ENCODE measurements at regions of chr17 and their contacts with region 1.

Region 1: DNA sequence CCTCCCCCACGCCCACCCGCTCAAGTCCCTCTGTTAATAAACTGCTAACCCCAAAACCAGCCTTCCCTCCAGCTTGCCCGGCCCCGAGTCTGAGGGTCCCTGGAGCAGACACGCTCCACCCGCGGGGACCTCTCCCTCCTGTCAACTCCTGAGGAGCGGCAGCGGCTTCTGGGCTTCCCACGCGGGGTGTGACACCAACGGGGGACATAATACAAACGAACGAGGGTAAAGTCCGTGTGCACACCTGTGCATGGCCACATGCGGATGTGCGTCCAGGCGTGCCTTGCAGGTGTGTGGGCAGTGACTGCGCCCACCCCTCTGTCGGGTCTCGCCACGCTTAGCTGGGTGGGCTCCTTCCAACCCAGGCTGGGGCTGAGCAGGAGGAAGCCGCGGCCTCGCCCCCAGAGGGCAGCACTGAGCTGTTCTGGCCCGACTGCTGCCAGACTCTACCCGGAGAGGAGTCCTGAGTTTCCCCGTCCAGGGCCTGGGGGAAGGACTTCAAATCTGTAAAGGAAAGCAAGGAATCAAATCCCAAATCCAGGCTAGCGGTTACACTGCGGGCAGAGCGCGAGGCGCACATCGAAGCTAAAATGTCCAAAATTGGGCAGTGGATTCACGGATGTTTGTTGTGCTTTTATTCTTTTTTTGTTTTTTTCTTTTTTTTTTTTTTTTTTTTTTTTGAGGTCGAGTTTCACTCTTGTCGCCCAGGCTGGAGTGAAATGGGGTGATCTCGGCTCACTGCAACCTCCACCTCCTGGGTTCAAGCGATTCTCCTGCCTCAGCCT is 24.2 kb upstream of the KRT17 start:
- DNase-seq: peak; percentile 92 to 93
- ATAC-seq: peak; percentile 84 to 94
- H3K4me3 ChIP-seq: peak overlapping the region; percentile 48
- H3K27ac ChIP-seq: peak overlapping the region; percentile 85 to 89
- H3K4me1 ChIP-seq: peaks cover 40% of the 10 kb centered on the region
- CTCF ChIP-seq: peak; percentile 93
- EP300 ChIP-seq: no peak
- POLR2A ChIP-seq: peak; percentile 38
- RAD21 ChIP-seq: peak; percentile 66 to 69

Region 2: DNA sequence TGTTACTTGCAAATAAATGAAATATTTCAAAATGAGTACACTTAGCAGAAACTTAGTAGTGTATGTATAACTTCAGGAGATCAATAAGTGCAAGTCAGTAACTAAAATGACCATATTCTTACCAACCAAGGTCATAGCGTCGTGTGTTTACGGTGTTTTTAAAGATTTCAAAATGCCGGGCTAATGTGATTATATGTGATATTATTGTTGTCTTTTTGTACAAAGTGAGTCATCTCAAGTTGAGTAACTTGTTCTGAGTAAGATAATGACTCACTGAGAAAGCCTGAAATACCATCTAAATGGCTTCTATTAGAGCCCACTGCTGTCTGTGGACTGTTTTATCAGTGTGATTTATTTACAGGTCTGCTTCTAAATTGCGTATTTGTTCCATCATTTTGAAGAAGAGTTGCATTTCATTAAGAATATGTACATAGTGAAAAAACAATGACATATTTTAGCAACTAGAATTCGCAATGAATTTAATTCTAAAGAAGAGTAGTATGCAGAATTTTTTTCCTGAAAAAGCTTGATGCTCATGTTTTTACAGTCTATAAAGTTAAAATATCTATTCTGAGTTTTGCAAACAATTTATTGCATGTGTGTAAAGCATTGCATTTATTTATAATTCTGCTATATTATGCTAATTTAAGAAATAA is 794.3 kb before region 1 on chr17:
- CTCF ChIA-PET with region 1: interaction called, 418 read pairs
- POLR2A ChIA-PET with region 1: no interaction called
- DNase-seq: peak; percentile 71 to 84
- ATAC-seq: peak; percentile 84 to 92
- H3K4me3 ChIP-seq: no peak overlapping the region
- H3K27ac ChIP-seq: peak overlapping the region; percentile 42 to 68
- H3K4me1 ChIP-seq: peaks cover 71% of the 10 kb centered on the region
- CTCF ChIP-seq: no peak
- EP300 ChIP-seq: peak; percentile 80; a peak in 3 of 5 replicates
- POLR2A ChIP-seq: no peak
- RAD21 ChIP-seq: peak in 1 of 2 experiments; percentile 42; a peak in 1 of 5 replicates

Region 3: GRCh38 chr17:41029633-41030245 is 618.9 kb before region 1 on chr17 and contains the start of gene KRTAP1-4:
- CTCF ChIA-PET with region 1: no interaction called
- POLR2A ChIA-PET with region 1: no interaction called
- DNase-seq: no peak
- ATAC-seq: no peak
- H3K4me3 ChIP-seq: no peak within 1 kb of the TSS
- H3K27ac ChIP-seq: no peak within 1 kb of the TSS
- H3K4me1 ChIP-seq: peaks cover 8% of the 10 kb centered on the region; the same call in 1 of the 3 replicates
- CTCF ChIP-seq: no peak
- EP300 ChIP-seq: no peak
- POLR2A ChIP-seq: no peak
- RAD21 ChIP-seq: no peak
- polyA plus RNA-seq, gene KRTAP1-4: not detected in 2 replicates

Region 4: GRCh38 chr17:41322094-41322902 is 326.3 kb before region 1 on chr17:
- CTCF ChIA-PET with region 1: interaction called, 28 read pairs
- POLR2A ChIA-PET with region 1: no interaction called
- DNase-seq: peak; percentile 46 to 68
- ATAC-seq: peak; percentile 67 to 79; a peak in 5 of 6 replicates
- H3K4me3 ChIP-seq: no peak overlapping the region
- H3K27ac ChIP-seq: 0 out of 6 replicates have a peak overlapping the region, but pooled peaks of 1 of the 2 experiments have one; percentile 43
- H3K4me1 ChIP-seq: no peaks in the 10 kb centered on the region
- CTCF ChIP-seq: peak; percentile 89
- EP300 ChIP-seq: no peak
- POLR2A ChIP-seq: no peak
- RAD21 ChIP-seq: peak; percentile 78 to 79

Region 5: DNA sequence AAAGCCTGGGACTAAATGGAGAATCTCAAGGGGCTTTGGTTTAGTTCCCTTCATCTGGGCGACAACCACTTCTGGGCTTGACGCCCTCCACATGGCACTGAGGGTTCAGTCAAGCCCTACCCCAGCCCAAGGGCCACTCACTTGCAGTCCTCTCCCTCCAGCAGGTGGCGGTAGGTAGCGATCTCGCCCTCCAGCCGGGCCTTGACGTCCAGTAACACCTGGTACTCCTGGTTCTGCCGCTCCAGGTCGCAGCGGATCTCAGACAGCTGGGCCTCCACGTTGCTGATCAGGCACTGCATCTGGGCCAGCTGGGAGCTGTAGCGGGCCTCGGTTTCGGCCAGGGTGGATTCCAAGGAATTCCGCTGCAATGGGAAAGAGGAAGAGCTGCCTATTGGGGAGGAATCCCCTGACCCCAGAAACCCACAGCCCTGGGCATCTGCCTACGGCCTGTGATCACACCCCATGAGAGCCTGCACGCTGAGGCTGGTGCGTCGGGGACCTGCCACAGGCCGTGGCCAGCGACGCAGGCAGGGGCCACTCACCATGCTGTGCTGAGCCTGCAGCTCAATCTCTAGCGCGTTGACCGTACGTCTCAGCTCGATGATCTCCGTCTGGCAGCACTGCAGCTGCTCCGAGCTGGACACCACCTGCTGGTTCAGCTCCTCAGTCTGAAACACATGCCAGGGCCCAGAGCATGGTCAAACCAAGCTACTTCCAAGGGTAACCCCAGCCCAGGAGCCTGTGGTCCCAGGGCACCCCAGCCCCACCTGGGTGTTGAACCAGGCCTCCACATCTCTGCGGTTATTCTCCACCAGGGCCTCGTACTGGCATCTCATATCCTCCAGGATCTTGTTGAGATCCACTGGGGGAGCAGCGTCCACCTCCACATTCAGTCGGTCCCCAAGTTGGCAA is 161.5 kb before region 1 on chr17:
- CTCF ChIA-PET with region 1: interaction called, 12 read pairs
- POLR2A ChIA-PET with region 1: no interaction called
- DNase-seq: peak in 1 of 2 experiments; percentile 48
- ATAC-seq: peak in 1 of 2 experiments; percentile 78; a peak in 4 of 6 replicates
- H3K4me3 ChIP-seq: no peak overlapping the region
- H3K27ac ChIP-seq: no peak overlapping the region
- H3K4me1 ChIP-seq: no peaks in the 10 kb centered on the region
- CTCF ChIP-seq: peak; percentile 45
- EP300 ChIP-seq: no peak
- POLR2A ChIP-seq: no peak
- RAD21 ChIP-seq: peak; percentile 29 to 49; a peak in 2 of 5 replicates

Region 6: GRCh38 chr17:41538565-41538991 is 110.0 kb before region 1 on chr17:
- CTCF ChIA-PET with region 1: interaction called, 50 read pairs
- POLR2A ChIA-PET with region 1: no interaction called
- DNase-seq: no peak
- ATAC-seq: no peak
- H3K4me3 ChIP-seq: no peak overlapping the region
- H3K27ac ChIP-seq: peak overlapping the region in 1 of 2 experiments; percentile 40; a peak in 3 of 6 replicates
- H3K4me1 ChIP-seq: peaks cover 16% of the 10 kb centered on the region; the same call in 2 of the 3 replicates
- CTCF ChIP-seq: no peak
- EP300 ChIP-seq: no peak
- POLR2A ChIP-seq: no peak
- RAD21 ChIP-seq: no peak

Region 7: GRCh38 chr17:41602524-41602923 is 46.1 kb before region 1 on chr17:
- CTCF ChIA-PET with region 1: interaction called, 15 read pairs
- POLR2A ChIA-PET with region 1: no interaction called
- DNase-seq: no peak
- ATAC-seq: peak; percentile 44 to 65; a peak in 4 of 6 replicates
- H3K4me3 ChIP-seq: no peak overlapping the region
- H3K27ac ChIP-seq: no peak overlapping the region
- H3K4me1 ChIP-seq: no peaks in the 10 kb centered on the region
- CTCF ChIP-seq: no peak
- EP300 ChIP-seq: no peak
- POLR2A ChIP-seq: no peak
- RAD21 ChIP-seq: no peak

Region 8: DNA sequence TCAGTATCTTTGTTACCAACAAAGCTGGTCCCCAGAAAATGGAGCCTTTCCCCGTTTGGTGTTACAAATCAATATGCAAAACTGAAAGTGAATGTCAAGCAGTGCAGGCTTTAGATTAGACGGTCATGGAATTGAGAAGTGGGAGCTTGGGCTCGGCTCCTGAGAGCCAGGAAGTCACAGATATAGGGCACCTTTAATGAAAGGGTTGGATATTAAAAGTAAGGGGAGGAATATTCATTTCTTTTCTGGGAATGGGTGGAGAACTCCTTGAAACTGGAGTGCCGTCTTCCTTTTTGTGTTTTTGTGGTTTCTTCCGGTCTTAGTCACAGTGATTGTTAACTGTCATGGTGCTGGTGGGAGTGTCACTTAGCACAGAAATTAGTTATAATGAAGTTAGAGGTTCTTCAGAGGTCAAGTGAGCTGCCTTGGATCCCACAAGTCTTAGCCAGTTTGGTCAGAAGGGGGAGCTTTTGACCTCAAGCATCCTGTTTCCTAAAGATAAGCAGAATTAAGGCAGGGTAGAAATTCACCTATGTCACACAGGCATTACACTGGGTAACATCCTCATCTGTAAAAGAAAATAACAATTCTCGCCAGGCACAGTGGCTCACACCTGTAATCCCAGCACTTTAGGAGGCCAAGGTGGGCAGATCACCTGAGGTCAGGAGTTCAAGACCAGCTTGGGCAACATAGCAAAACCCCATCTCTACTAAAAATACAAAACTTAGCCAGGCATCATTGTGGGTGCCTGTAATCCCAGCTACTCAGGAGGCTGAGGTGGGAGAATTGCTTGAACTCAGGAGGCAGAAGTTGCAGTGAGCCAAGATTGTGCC is 30.5 kb after region 1 on chr17:
- CTCF ChIA-PET with region 1: interaction called, 12 read pairs
- POLR2A ChIA-PET with region 1: no interaction called
- DNase-seq: peak in 1 of 2 experiments; percentile 80
- ATAC-seq: peak; percentile 35 to 47
- H3K4me3 ChIP-seq: peak overlapping the region; percentile 3; the same call in 1 of the 3 replicates
- H3K27ac ChIP-seq: peak overlapping the region; percentile 73 to 83
- H3K4me1 ChIP-seq: peaks cover 48% of the 10 kb centered on the region
- CTCF ChIP-seq: peak; percentile 42
- EP300 ChIP-seq: no peak
- POLR2A ChIP-seq: no peak
- RAD21 ChIP-seq: peak in 1 of 2 experiments; percentile 38; a peak in 3 of 5 replicates

Measured in A549 (cell line).